ENCODE measurements at regions of chr5 and their contacts with region 1.

Region 1: DNA sequence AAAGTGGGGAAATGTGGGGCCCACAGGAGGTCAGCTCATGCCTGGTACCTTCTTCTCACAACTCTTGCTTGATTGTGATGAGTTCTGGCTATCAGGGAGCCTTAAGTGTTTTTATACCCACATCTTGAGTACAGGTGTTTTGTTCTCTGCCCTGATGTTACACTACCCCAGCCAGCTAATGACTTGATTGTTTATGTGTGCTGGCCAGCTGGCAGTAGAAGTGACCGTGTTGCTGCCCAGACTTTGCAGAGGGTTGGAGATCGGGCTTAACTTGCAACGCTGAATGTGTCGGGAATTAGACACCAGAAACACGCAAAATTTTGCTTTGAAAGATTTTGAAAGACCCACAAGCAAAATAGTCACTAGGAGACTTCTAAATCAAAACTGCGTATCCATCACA is 16.9 kb upstream of the ZDHHC11B start:
- DNase-seq: peak in 1 of 2 experiments; percentile 34
- H3K4me3 ChIP-seq: no peak overlapping the region
- H3K27ac ChIP-seq: no peak overlapping the region
- H3K4me1 ChIP-seq: no peaks in the 10 kb centered on the region
- H3K27me3 ChIP-seq: peaks cover 83% of the 10 kb centered on the region
- CTCF ChIP-seq: no peak

Region 2: GRCh38 chr5:717143-717542 is 84.3 kb before region 1 on chr5:
- CTCF ChIA-PET with region 1: no interaction called
- POLR2A ChIA-PET with region 1: no interaction called
- intact Hi-C with region 1: loop called (anchors 5 kb)
- DNase-seq: peak in 1 of 2 experiments; percentile 19
- H3K4me3 ChIP-seq: no peak overlapping the region
- H3K27ac ChIP-seq: no peak overlapping the region
- H3K4me1 ChIP-seq: no peaks in the 10 kb centered on the region
- H3K27me3 ChIP-seq: peaks cover 74% of the 10 kb centered on the region
- CTCF ChIP-seq: no peak

Measured in PC-9 (cell line).